ENCODE measurements at regions of chr11 and their contacts with region 1.

Region 1: GRCh38 chr11:33161120-33162005 is at the start of gene CSTF3:
- DNase-seq: peak; percentile 91
- H3K4me3 Mint-ChIP-seq: peak within 1 kb of the TSS; percentile 100
- H3K27ac Mint-ChIP-seq: peak within 1 kb of the TSS; percentile 100
- H3K4me1 Mint-ChIP-seq: peaks cover 40% of the 10 kb centered on the region
- H3K27me3 Mint-ChIP-seq: no peaks in the 10 kb centered on the region
- total RNA-seq, gene CSTF3: 34.9 and 36.5 TPM in 2 replicates

Region 2: DNA sequence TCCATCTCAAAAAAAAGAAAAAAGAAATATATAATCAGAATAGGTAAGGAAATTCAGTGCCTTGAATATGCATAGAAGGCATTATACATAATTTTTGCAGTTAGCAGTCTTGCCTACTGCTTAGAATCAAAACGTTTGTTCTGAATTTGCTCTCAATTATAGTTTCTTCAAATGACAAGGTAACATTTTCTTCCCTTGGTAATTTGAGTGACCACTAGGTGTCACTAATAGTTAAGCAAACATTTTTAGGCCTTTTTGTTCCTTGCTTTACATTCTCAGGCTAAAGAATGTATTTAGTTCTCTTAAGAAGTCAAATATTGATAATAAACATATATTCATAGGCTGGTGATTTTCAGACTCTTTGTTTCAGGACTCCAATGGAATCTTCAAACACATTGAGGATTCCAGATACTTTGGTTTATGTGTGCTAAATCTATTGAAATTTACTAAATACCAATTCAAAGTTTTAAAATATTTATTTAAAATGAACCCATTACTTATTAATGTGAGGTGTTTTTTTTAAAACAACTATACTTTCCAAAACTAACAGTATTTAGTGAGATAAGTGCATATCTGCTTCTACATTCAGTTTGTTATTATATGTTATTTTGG is 200.7 kb before region 1 on chr11:
- intact Hi-C with region 1: loop called (anchors 5 kb)
- DNase-seq: no peak
- H3K4me3 Mint-ChIP-seq: no peak overlapping the region
- H3K27ac Mint-ChIP-seq: no peak overlapping the region
- H3K4me1 Mint-ChIP-seq: peaks cover 13% of the 10 kb centered on the region
- H3K27me3 Mint-ChIP-seq: no peaks in the 10 kb centered on the region

Region 3: GRCh38 chr11:33015621-33016551 is 145.5 kb before region 1 on chr11 and contains the start of gene DEPDC7:
- intact Hi-C with region 1: loop called (anchors 5 kb)
- DNase-seq: peak; percentile 66
- H3K4me3 Mint-ChIP-seq: peak within 1 kb of the TSS; percentile 79
- H3K27ac Mint-ChIP-seq: no peak within 1 kb of the TSS
- H3K4me1 Mint-ChIP-seq: peaks cover 18% of the 10 kb centered on the region
- H3K27me3 Mint-ChIP-seq: peaks cover 41% of the 10 kb centered on the region
- total RNA-seq, gene DEPDC7: 0.26 and 0.61 TPM in 2 replicates

Region 4: GRCh38 chr11:33329705-33330329 is 168.5 kb after region 1 on chr11:
- intact Hi-C with region 1: loop called (anchors 1 kb)
- DNase-seq: no peak
- H3K4me3 Mint-ChIP-seq: no peak overlapping the region
- H3K27ac Mint-ChIP-seq: no peak overlapping the region
- H3K4me1 Mint-ChIP-seq: no peaks in the 10 kb centered on the region
- H3K27me3 Mint-ChIP-seq: no peaks in the 10 kb centered on the region

Region 5: GRCh38 chr11:33700425-33701271 is 539.3 kb after region 1 on chr11 and contains the start of gene C11orf91:
- intact Hi-C with region 1: loop called (anchors 5 kb)
- DNase-seq: peak; percentile 94
- H3K4me3 Mint-ChIP-seq: peak within 1 kb of the TSS; percentile 84
- H3K27ac Mint-ChIP-seq: peak within 1 kb of the TSS; percentile 78
- H3K4me1 Mint-ChIP-seq: peaks cover 29% of the 10 kb centered on the region
- H3K27me3 Mint-ChIP-seq: peaks cover 22% of the 10 kb centered on the region
- total RNA-seq, gene C11orf91: 0.23 TPM in 1 of 2 replicates, not detected in the other

Region 6: DNA sequence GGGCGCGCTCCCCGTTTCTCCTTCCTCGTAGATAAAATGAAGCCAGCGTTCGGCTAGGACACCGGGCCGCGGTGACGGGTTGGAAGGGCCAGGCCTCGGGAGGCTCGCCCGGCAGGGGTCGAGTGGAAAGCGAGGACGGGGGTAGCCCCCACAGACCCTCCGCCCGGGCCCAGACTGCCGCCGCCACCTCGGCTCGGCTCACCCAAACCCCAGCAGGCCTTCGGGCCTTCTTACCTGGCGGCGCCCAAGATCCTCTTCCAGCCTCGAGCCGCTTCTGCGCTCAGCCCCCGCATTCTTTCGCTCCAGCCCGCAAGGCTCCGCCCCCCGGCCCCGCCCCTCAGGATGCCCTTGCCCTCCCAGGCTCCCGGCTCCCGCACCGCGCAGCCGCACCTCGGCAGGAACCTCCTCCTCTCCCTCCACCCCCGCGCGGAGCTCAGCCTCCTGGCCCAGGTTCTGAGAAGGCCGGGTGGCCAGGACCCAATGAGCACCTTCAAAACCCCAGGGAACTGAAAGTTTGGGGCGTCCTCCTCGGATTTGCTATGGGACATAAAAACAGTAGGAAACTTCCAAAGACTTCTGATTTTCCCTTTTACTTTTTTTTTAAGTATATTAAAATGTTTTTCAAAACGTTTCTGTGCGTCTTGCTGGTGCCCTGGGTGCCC is 574.9 kb after region 1 on chr11 and contains the start of gene CD59:
- intact Hi-C with region 1: loop called (anchors 10 kb)
- DNase-seq: peak; percentile 83
- H3K4me3 Mint-ChIP-seq: peak within 1 kb of the TSS; percentile 87
- H3K27ac Mint-ChIP-seq: peak within 1 kb of the TSS; percentile 89
- H3K4me1 Mint-ChIP-seq: peaks cover 37% of the 10 kb centered on the region
- H3K27me3 Mint-ChIP-seq: peaks cover 3% of the 10 kb centered on the region
- total RNA-seq, gene CD59: 140 and 143 TPM in 2 replicates

Region 7: DNA sequence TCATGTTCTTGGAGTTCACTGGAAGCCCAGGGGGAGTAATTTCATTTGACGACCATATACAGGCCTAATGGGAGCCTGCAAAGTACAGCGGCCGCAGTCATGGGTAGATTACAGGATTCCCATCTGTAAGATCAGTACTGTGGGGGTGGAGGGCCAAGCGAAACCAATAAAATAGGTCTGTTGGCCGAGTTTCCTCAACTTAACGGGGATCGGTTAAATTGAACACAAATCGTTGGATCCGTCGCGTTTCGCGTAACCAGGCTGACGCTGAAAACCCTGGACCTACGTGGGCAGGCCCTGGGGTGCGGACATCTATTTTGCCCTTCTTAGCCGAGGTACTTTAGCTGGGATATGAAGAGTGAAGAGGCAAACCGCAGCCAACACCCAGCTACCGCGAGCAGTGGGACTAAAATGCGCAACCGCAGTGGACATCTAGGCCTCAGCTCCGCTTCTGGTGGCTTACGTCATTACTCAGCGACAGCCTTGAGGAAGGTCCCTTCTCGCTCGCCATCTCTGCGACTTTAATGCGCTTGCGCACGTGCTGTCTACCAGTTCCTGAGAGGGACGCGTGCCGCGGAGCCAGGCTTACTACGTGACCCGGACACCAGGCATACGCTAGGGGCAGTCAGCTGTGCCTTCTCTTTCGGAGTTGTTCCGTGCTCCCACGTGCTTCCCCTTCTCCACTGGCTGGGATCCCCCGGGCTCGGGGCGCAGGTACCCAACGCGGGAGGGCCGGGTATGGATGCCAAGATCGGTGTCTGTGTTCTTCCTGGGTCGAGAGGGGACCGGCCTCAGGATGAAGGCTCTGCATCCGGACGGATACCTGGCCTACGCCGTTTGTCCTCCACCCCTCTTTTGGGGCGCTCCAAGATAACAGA is 944.0 kb after region 1 on chr11 and contains the start of gene NAT10:
- intact Hi-C with region 1: loop called (anchors 2 kb)
- DNase-seq: peak; percentile 97
- H3K4me3 Mint-ChIP-seq: peak within 1 kb of the TSS; percentile 95
- H3K27ac Mint-ChIP-seq: peak within 1 kb of the TSS; percentile 90
- H3K4me1 Mint-ChIP-seq: peaks cover 48% of the 10 kb centered on the region
- H3K27me3 Mint-ChIP-seq: no peaks in the 10 kb centered on the region
- total RNA-seq, gene NAT10: 157 and 158 TPM in 2 replicates

Measured in activated T-helper 1 cell treated with anti-CD3 and anti-CD28 coated beads, Interleukin-12 subunit alpha, Interleukin-12 subunit beta, Interleukin-2, Interleukin-4 antibody, amounts not matched to agents 30 ng/mL and 10 ng/mL and 1 ng/mL, durations not matched to agents 14 hours and 24 hours and 36 hours (primary cell).